GM12878 (cell line): ENCODE measurements at regions of chr22 and their contacts with region 1.

Region 1: DNA sequence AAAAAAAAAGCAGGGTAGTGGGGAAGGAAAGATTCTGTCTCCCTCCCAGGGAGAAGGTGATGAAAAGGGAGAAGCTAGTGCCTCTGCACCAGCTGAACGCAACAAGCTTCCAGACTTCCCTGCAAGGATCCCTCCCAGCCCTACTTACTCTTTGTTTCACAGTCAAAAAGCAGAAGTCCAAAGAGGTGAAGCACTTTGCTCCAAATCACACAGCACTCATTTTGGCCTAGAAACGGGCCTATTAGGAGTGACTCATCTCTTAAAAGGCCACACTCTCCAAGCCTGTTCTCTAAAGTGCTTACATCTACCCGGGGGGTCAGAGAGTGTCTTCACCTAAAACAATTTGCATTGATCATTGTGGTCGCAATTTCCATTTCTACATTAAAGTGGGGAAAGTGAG is 17.7 kb upstream of the GRK3 start:
- DNase-seq: no peak
- ATAC-seq: peak; percentile 80
- H3K4me3 ChIP-seq: no peak overlapping the region
- H3K27ac ChIP-seq: no peak overlapping the region
- H3K4me1 ChIP-seq: no peaks in the 10 kb centered on the region; the same call in 1 of the 2 replicates
- H3K27me3 ChIP-seq: no peaks in the 10 kb centered on the region
- CTCF ChIP-seq: no peak
- EP300 ChIP-seq: no peak
- POLR2A ChIP-seq: no peak
- RAD21 ChIP-seq: no peak

Region 2: DNA sequence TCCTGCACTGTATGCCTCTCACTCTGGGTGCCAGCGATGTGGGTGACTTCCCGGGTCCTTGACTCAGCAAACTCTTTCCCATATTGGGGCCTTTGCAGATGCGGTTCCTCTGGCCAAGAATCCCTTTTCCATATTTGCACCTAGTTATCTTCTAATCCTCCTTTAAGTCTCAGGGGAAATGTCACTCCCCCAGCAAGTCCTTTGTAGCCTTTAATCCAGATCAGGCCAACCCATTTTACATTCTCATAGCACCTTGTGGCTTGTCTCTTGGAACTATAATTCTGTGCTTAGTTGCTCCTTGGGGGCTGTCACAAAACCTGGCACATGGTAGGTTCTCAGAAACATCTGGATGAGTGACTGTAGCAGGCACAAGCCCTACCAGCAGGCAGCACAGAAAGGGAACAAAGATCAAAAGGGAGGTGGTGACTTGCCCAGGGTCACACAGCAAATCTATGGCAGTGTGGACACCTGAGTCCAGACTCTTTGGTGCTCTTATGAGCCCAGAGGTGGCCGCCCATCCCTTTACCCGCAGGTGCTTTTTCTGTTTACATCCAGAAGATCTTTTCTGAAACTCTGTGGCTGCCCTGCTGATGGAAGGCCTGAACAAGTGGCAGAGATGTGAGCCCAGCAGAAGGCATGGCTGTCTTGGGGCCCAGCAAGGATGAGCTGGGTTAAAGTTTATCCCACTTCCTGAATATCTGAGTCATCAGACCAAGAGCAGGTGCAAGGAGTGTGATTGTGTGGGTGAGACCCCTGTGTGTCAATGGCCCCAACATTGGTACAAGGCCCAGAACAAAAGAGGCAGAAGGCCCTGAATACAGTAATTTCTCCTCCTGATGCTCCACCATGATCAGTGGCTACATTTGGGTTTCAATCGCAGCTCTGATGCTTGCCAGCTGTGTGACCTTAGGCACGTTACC is 60.9 kb before region 1 on chr22:
- CTCF ChIA-PET with region 1: interaction called, 5 read pairs
- POLR2A ChIA-PET with region 1: no interaction called
- RAD21 ChIA-PET with region 1: interaction called, 21 read pairs
- SMC1A ChIA-PET with region 1: interaction called, 5 read pairs
- in situ Hi-C with region 1: no loop called
- intact Hi-C with region 1: no loop called
- DNase-seq: peak; percentile 47
- ATAC-seq: peak; percentile 85
- H3K4me3 ChIP-seq: no peak overlapping the region
- H3K27ac ChIP-seq: no peak overlapping the region; the same call in 1 of the 2 replicates
- H3K4me1 ChIP-seq: peaks cover 10% of the 10 kb centered on the region
- H3K27me3 ChIP-seq: no peaks in the 10 kb centered on the region
- CTCF ChIP-seq: no peak
- EP300 ChIP-seq: peak; percentile 48 to 69; a peak in 3 of 4 replicates
- POLR2A ChIP-seq: no peak
- RAD21 ChIP-seq: no peak

Region 3: DNA sequence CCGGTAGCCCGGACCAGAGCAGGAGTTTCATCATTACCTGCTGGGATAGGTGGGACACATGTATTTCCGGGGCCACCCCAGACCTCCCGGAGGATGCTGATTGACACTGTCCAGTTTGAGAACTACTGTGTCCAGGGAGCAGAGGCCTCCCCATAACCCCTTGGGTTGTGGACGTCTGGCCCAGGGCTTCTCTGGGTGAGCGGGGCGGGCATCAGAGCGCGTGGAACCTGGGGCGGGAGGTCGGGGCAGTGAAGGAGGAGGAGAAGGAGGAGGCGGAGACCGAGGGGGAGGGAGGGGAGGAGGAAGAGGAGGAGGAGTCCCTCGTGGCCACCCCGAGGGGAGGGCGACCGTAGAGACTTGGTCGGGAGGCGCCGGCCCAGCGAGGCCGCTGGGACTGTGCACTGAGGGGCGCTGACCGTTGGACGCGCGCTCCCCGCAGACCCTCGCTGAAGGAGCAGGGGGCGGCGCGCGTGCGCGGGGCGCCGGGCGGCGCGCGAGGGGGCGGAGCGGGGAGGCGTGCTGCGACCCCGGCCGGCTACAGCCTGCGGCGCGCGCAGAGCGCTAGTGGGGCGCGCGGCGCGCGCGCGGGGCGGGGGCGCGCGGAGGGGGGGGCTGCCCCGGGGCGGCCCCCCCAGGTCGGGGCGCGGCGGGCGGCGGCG is 17.7 kb after region 1 on chr22 and contains the start of gene GRK3:
- CTCF ChIA-PET with region 1: interaction called, 89 read pairs
- POLR2A ChIA-PET with region 1: interaction called, 6 read pairs
- RAD21 ChIA-PET with region 1: interaction called, 202 read pairs
- SMC1A ChIA-PET with region 1: interaction called, 170 read pairs
- in situ Hi-C with region 1: no loop called
- intact Hi-C with region 1: no loop called
- DNase-seq: no peak
- ATAC-seq: peak; percentile 71
- H3K4me3 ChIP-seq: peak within 1 kb of the TSS; percentile 94
- H3K27ac ChIP-seq: peak within 1 kb of the TSS; percentile 77
- H3K4me1 ChIP-seq: peaks cover 25% of the 10 kb centered on the region
- H3K27me3 ChIP-seq: no peaks in the 10 kb centered on the region
- CTCF ChIP-seq: no peak
- EP300 ChIP-seq: no peak
- POLR2A ChIP-seq: peak; percentile 79
- RAD21 ChIP-seq: no peak
- polyA plus RNA-seq, gene GRK3: 4.3 to 4.6 TPM

Region 4: DNA sequence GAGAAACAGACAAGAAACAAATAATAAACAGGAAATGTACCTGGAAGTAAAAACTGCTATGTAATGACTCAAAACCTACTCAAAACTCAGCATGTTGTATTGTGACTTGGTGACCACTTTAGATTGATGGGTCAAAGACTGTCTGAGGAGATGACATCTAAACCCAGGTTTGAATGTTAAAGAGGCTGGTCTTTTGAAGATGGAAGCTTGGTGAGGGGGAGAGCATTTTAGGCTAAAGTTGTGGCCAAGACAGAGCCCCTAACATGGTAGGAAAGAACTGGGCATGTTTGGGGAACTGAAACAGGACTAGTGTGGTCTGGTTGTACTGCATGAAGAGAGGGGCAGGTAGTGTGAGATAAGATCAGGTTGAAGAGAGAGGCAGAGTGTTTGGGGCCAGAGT is 110.0 kb after region 1 on chr22:
- CTCF ChIA-PET with region 1: interaction called, 11 read pairs
- POLR2A ChIA-PET with region 1: no interaction called
- RAD21 ChIA-PET with region 1: interaction called, 5 read pairs
- SMC1A ChIA-PET with region 1: interaction called, 13 read pairs
- in situ Hi-C with region 1: no loop called
- intact Hi-C with region 1: no loop called
- DNase-seq: peak; percentile 77
- ATAC-seq: peak; percentile 99
- H3K4me3 ChIP-seq: no peak overlapping the region
- H3K27ac ChIP-seq: peak overlapping the region; percentile 70
- H3K4me1 ChIP-seq: peaks cover 13% of the 10 kb centered on the region
- H3K27me3 ChIP-seq: no peaks in the 10 kb centered on the region
- CTCF ChIP-seq: no peak
- EP300 ChIP-seq: peak in 1 of 2 experiments; percentile 65; a peak in 2 of 4 replicates
- POLR2A ChIP-seq: no peak
- RAD21 ChIP-seq: no peak

Region 5: DNA sequence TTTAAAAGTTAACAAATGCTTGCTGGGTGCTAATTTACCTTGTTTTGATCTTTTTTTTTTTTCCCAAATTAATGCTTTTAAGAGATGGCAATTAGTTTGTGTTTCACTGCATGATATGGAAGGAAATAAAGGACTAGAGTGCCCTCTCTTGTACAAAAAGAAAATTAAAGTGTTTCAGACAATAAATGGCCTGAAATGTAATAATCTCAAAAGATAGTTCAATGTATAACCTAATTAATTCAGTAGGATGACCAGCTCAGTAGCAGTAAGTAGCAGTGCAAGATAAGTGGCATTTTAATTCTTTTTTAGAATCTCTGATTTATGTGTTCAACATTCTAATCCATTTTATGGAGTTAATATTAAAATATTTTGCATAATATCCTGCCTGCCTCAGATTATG is 155.3 kb after region 1 on chr22:
- CTCF ChIA-PET with region 1: interaction called, 88 read pairs
- POLR2A ChIA-PET with region 1: no interaction called
- RAD21 ChIA-PET with region 1: interaction called, 43 read pairs
- SMC1A ChIA-PET with region 1: interaction called, 61 read pairs
- in situ Hi-C with region 1: no loop called
- intact Hi-C with region 1: loop called (anchors 1 kb)
- DNase-seq: no peak
- ATAC-seq: peak; percentile 61
- H3K4me3 ChIP-seq: no peak overlapping the region
- H3K27ac ChIP-seq: no peak overlapping the region; the same call in 1 of the 2 replicates
- H3K4me1 ChIP-seq: peaks cover 15% of the 10 kb centered on the region; the same call in 1 of the 2 replicates
- H3K27me3 ChIP-seq: no peaks in the 10 kb centered on the region
- CTCF ChIP-seq: peak; percentile 15 to 57 (median 33); a peak in 2 of 6 replicates
- EP300 ChIP-seq: no peak
- POLR2A ChIP-seq: no peak
- RAD21 ChIP-seq: peak; percentile 72

Region 6: DNA sequence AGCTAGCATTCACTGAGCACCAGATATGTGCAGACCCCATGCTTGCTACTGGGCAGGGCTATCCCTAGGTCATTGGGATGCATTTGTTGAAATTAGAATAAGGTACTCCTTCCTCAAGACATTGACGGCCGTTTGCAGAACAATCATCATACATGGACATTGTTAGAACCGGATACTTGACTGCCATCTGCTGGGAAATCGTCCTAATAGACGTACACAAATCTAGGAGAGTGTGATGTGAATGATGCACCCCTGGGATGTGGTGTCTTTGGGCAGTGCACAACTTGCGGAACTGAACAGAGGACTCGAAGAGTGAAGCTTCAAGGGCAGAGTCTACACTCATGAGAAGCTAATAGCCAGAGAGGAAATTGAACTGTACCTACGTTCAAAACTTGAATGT is 231.1 kb after region 1 on chr22:
- CTCF ChIA-PET with region 1: interaction called, 64 read pairs
- POLR2A ChIA-PET with region 1: interaction called, 4 read pairs
- RAD21 ChIA-PET with region 1: interaction called, 57 read pairs
- SMC1A ChIA-PET with region 1: interaction called, 52 read pairs
- in situ Hi-C with region 1: no loop called
- intact Hi-C with region 1: loop called (anchors 1 kb)
- DNase-seq: peak; percentile 11
- ATAC-seq: peak; percentile 70
- H3K4me3 ChIP-seq: no peak overlapping the region
- H3K27ac ChIP-seq: no peak overlapping the region
- H3K4me1 ChIP-seq: no peaks in the 10 kb centered on the region
- H3K27me3 ChIP-seq: no peaks in the 10 kb centered on the region
- CTCF ChIP-seq: peak; percentile 25 to 44 (median 44); a peak in 5 of 6 replicates
- EP300 ChIP-seq: no peak
- POLR2A ChIP-seq: no peak
- RAD21 ChIP-seq: peak; percentile 36; the same call in 1 of the 2 replicates